OCI-LY7 (cell line): ENCODE measurements at regions of chr10 and their contacts with region 1.

Region 1: DNA sequence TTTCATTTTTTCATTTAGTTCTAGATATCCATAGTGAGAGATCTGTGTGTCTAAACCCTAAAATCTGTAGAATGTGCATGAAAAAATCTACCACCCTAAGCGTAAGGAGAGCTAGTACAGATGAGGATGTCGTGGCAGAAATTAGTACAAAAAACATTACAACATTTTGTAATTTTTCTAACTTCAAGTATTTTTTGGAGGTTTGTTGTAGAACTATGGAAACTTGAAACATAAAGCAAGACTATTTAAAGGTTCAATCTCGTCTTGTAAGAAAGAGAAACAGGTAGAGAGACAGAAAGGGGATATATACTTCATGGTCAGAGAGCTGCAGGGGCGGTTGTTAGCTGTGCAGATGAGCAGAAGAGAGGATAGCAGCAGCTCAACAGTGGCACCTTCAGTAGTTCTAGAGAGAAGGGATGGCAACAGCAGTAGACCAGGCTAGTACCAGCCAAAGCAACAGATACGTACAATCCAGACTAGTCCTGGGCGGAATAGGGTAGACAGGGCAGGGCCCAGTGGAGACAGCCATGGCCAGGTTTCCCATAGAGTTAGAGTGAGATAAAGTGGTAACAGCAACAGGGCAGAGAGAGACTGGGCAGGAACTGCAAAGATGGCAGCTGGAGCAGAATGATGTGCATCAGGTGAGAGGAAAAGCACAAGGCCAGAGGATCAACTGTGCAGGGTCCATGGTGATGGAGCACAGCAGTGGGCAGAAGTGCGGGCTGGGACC is 145.2 kb downstream of the FRMD4A start:
- DNase-seq: peak; percentile 64
- H3K4me3 ChIP-seq: peak overlapping the region; percentile 35
- H3K27ac ChIP-seq: peak overlapping the region; percentile 48
- H3K4me1 ChIP-seq: peaks cover 25% of the 10 kb centered on the region
- CTCF ChIP-seq: no peak

Region 2: DNA sequence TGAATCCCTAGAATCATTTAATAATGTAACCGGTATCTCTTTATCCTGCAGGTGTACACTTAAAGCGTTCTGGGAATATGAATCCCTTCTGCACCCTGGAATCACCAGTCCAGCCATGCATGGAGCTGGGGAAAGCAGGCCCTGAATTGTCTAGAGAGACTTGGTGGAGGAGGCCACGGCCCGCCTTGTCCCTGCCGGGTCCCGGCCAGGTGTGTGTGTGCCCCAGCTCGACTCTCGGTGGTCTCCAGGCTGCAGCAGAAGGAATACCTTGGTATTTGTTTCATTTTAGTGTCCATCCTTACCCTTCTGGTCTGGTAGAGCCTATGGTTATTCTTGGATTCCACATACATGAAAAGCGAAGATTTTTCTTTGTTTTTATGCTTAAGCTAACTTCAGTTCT is 540.6 kb before region 1 on chr10:
- CTCF ChIA-PET with region 1: no interaction called
- POLR2A ChIA-PET with region 1: no interaction called
- intact Hi-C with region 1: no loop called
- DNase-seq: no peak
- H3K4me3 ChIP-seq: no peak overlapping the region
- H3K27ac ChIP-seq: no peak overlapping the region
- H3K4me1 ChIP-seq: no peaks in the 10 kb centered on the region
- CTCF ChIP-seq: no peak

Region 3: GRCh38 chr10:14405076-14406065 is 219.9 kb after region 1 on chr10:
- CTCF ChIA-PET with region 1: no interaction called
- POLR2A ChIA-PET with region 1: no interaction called
- intact Hi-C with region 1: no loop called
- DNase-seq: no peak
- H3K4me3 ChIP-seq: no peak overlapping the region
- H3K27ac ChIP-seq: no peak overlapping the region
- H3K4me1 ChIP-seq: no peaks in the 10 kb centered on the region
- CTCF ChIP-seq: no peak

Region 4: DNA sequence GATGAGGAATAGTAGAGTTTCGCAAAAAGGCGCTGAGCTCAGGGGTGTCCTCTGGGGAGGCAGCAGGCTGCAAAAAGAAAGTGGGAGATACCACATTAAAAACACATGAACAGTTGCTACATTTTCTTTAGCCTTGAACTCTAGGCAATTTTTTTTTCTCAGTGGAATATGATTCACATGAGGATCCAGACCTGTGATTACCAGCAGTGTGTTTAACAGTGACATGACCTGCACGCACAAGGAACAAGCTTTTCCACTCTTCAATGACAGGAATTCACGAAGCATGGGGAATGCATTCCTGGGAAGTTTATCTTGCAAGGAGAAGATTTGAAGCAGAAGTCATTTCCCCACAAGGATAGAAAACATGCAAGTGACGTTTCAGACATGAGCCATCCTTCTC is 1372.7 kb after region 1 on chr10:
- CTCF ChIA-PET with region 1: no interaction called
- POLR2A ChIA-PET with region 1: interaction called, 11 read pairs
- intact Hi-C with region 1: no loop called
- DNase-seq: no peak
- H3K4me3 ChIP-seq: no peak overlapping the region
- H3K27ac ChIP-seq: no peak overlapping the region
- H3K4me1 ChIP-seq: no peaks in the 10 kb centered on the region
- CTCF ChIP-seq: no peak